ENCODE measurements at regions of chr14 and their contacts with region 1.

Region 1: DNA sequence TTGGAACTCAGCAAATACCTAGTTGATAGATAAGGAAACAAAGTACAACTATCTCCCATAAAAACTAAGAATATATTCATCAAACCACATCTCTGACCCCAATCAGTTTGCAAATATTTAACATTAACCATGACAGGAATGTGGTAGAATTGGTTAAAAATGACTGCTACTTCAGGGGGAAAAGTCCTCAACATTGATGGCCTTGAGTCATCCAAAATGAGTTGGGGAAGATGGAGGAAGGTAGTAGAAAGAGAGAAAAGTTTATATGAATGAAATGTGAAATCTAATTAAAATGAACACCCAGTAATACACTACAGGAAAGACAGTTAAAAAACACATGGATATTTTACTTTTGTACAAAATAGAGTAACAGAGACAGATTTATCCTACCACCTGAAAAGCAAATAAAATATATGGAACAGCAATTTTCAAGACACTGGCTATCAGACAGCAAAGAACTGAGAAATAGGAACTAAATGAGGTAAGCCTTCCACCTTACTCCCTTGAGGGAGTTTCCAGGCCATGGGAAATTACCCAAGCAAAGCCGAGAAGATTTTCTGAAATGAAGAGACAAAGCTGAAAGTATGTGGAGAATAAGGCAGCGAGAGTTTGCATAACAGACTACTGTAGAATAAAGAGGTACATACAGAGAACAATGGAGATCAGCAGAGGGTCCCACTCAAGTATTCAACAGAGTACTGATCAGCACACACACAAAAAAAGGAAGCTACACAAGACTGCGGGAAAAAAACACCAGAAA is 49.6 kb downstream of the TC2N start:
- DNase-seq: no peak
- ATAC-seq: peak; percentile 97
- H3K4me3 Mint-ChIP-seq: peak overlapping the region; percentile 33
- H3K27ac Mint-ChIP-seq: peak overlapping the region; percentile 27
- H3K4me1 Mint-ChIP-seq: peaks cover 20% of the 10 kb centered on the region
- H3K27me3 Mint-ChIP-seq: peaks cover 4% of the 10 kb centered on the region
- CTCF ChIP-seq: no peak

Region 2: GRCh38 chr14:91774140-91775096 is 43.3 kb before region 1 on chr14:
- CTCF ChIA-PET with region 1: no interaction called
- POLR2A ChIA-PET with region 1: no interaction called
- intact Hi-C with region 1: loop called (anchors 5 kb)
- DNase-seq: no peak
- ATAC-seq: peak; percentile 89
- H3K4me3 Mint-ChIP-seq: peak overlapping the region; percentile 66
- H3K27ac Mint-ChIP-seq: no peak overlapping the region
- H3K4me1 Mint-ChIP-seq: peaks cover 18% of the 10 kb centered on the region
- H3K27me3 Mint-ChIP-seq: peaks cover 5% of the 10 kb centered on the region
- CTCF ChIP-seq: no peak

Region 3: DNA sequence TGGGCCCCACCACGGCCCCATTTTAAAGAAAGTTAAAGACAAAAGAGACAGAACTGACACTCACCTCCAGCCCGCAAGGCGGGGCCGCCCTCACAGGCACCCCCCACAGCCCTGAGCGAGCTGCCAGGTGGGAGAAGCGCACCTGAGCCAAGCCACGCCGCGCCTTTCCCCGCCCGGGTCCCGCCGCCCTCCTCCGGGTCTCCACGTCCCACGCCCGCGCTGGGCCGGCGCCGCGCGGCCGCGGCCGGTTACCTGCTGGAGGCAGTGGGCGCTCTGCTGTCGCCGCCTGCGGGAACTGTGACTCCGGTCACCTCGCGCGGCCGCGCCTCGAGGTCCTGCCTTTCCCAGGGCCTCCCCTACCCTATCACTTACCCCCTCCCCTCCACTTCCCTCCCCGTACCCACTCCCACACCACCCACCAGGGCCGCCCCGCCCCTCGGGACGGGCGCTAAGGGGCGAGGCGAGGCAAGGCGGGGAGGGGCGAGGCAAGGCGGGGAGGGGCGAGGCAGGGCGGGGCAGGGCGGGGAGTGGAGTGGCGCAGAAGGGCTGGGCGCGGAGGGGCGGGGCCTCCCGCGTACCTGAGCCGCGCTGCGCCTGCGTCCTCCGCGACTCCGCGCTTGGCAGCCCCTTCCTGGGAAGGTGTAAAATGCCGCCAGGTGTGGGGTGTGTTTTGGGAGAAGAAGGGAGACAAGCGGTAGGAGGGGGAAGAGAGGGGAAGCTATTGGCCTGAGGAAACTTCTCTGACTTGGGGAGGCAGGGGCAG is 18.6 kb after region 1 on chr14:
- CTCF ChIA-PET with region 1: no interaction called
- POLR2A ChIA-PET with region 1: interaction called, 3 read pairs
- intact Hi-C with region 1: loop called (anchors 1 kb)
- DNase-seq: peak; percentile 68
- ATAC-seq: peak; percentile 94
- H3K4me3 Mint-ChIP-seq: peak overlapping the region; percentile 89
- H3K27ac Mint-ChIP-seq: peak overlapping the region; percentile 78
- H3K4me1 Mint-ChIP-seq: peaks cover 53% of the 10 kb centered on the region
- H3K27me3 Mint-ChIP-seq: peaks cover 5% of the 10 kb centered on the region
- CTCF ChIP-seq: no peak

Region 4: DNA sequence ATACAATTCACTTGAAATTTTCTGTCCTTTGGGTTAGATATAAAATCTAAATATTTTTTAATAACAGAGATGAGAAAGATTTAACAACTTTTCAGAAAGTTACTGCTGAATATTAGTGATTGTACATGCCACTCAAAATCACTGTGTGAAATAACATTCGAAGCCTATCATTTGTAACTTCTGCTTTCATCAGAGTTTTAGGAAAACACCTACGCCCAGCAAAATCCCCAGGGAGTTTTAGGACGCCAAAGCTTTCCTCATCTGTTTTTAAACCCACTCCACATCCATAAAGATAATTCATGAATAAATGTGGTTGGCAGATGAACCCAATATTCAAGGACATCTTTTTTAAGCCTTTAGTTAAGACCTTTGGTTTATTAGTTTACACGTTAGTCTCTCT is 25.7 kb after region 1 on chr14:
- CTCF ChIA-PET with region 1: no interaction called
- POLR2A ChIA-PET with region 1: no interaction called
- intact Hi-C with region 1: loop called (anchors 1 kb)
- DNase-seq: no peak
- ATAC-seq: peak; percentile 73
- H3K4me3 Mint-ChIP-seq: peak overlapping the region; percentile 50
- H3K27ac Mint-ChIP-seq: peak overlapping the region; percentile 71
- H3K4me1 Mint-ChIP-seq: peaks cover 65% of the 10 kb centered on the region
- H3K27me3 Mint-ChIP-seq: peaks cover 3% of the 10 kb centered on the region
- CTCF ChIP-seq: no peak

Region 5: DNA sequence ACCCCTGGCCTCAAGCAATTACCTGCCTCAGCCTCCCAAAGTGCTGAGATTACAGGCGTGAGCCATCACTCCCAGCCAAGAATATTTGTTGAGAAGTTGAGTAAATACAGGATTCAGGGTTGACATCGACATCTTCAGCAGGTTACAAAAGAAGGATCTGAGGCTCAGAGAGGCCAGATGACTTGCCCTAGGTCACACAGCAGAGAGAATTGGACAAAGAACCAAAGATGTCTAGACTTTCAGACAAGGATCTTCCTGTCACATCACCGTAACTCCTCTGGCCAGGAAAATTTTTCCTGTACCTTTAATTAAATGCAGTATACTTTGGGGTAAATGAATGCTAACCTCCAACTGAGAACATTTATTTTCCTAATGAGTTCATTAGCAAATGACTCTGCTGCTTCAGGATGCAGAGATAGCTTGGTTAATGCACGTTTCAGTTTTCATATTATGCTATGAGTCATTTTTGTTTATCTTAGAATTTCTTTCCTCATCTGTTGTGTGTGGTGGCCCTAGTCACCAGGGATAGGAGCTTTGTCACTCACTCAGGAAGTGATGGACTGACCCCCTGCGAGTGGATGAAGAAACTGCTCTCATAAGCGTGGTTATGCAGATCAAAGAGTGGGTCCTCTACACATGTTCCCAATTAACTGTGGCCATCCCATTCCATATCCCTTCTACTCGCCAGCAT is 40.6 kb after region 1 on chr14:
- CTCF ChIA-PET with region 1: no interaction called
- POLR2A ChIA-PET with region 1: no interaction called
- intact Hi-C with region 1: no loop called
- DNase-seq: no peak
- ATAC-seq: no peak
- H3K4me3 Mint-ChIP-seq: no peak overlapping the region
- H3K27ac Mint-ChIP-seq: no peak overlapping the region
- H3K4me1 Mint-ChIP-seq: peaks cover 12% of the 10 kb centered on the region
- H3K27me3 Mint-ChIP-seq: peaks cover 2% of the 10 kb centered on the region
- CTCF ChIP-seq: no peak

Region 6: GRCh38 chr14:91872517-91873470 is 55.0 kb after region 1 on chr14:
- CTCF ChIA-PET with region 1: no interaction called
- POLR2A ChIA-PET with region 1: no interaction called
- intact Hi-C with region 1: loop called (anchors 5 kb)
- DNase-seq: no peak
- ATAC-seq: peak; percentile 14
- H3K4me3 Mint-ChIP-seq: peak overlapping the region; percentile 59
- H3K27ac Mint-ChIP-seq: peak overlapping the region; percentile 68
- H3K4me1 Mint-ChIP-seq: peaks cover 50% of the 10 kb centered on the region
- H3K27me3 Mint-ChIP-seq: no peaks in the 10 kb centered on the region
- CTCF ChIP-seq: no peak

Measured in activated B cell treated with CpG ODN at 0.5 μM for 24 hours (primary cell).